Calu3 (cell line): ENCODE measurements at regions of chr5 and their contacts with region 1.

Region 1: DNA sequence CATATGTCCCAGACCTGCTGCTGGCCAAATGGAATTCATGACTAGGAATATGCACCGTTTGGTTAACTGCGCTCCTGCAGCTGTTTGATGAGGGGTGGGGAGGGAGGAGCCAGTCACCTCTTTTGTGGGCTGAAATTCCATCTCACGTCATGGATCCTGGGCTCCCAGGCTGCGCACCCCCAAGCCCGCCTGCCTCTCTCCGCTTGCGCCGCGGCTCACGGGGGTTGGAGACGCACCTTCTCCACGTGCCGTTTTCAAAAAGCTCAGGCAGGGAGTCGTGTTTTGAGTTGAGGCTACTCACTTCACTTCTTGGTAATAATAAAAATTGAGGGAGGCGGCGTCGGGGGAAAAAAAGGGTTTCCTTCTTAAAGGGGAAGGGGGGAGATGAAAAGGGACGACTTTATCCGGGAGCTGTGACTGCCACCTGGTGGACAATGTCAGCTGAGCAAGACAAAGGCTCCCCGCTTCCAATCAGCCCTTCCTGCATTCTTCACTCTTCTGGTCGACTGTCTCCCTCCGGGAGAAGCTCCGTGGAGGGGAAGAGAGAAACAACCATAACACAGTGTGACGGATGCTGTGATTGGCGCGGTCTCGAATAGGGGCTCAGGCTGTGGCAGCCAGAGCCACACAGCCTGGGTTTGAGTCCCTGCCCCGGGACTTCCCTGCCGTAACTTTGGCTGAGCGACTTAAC is 15.9 kb upstream of the C5orf47 start:
- DNase-seq: peak; percentile 85
- H3K4me3 Mint-ChIP-seq: peak overlapping the region; percentile 73
- H3K27ac Mint-ChIP-seq: peak overlapping the region; percentile 60
- H3K4me1 Mint-ChIP-seq: peaks cover 22% of the 10 kb centered on the region
- H3K27me3 Mint-ChIP-seq: peaks cover 21% of the 10 kb centered on the region
- CTCF ChIP-seq: peak; percentile 82

Region 2: GRCh38 chr5:173689737-173690360 is 283.2 kb before region 1 on chr5:
- CTCF ChIA-PET with region 1: interaction called, 4 read pairs
- intact Hi-C with region 1: loop called (anchors 1 kb)
- DNase-seq: peak; percentile 35
- H3K4me3 Mint-ChIP-seq: peak overlapping the region; percentile 28
- H3K27ac Mint-ChIP-seq: peak overlapping the region; percentile 66
- H3K4me1 Mint-ChIP-seq: peaks cover 27% of the 10 kb centered on the region
- H3K27me3 Mint-ChIP-seq: no peaks in the 10 kb centered on the region
- CTCF ChIP-seq: no peak

Region 3: DNA sequence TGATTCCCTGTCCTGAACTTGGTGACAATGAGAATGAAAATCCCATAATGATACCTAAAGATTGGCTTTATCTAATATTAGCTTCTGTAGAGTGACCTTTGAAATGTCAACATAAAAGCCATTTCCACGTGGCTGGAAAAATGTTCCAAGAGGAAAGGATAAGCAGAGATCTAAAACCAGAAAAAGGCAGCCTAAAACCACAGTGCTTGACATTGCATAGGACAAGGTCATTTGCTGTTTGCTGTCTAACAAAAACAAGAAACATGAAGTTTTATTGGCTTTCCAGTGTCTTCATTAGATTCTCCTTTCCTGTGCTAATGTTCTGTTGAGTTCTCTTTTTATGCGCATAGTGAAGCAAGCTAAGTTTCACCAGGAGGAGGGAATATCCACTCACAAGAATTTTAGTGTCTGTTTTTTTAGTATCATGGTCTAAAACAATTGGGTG is 40.4 kb before region 1 on chr5:
- CTCF ChIA-PET with region 1: no interaction called
- intact Hi-C with region 1: no loop called
- DNase-seq: no peak
- H3K4me3 Mint-ChIP-seq: no peak overlapping the region
- H3K27ac Mint-ChIP-seq: no peak overlapping the region
- H3K4me1 Mint-ChIP-seq: peaks cover 6% of the 10 kb centered on the region
- H3K27me3 Mint-ChIP-seq: no peaks in the 10 kb centered on the region
- CTCF ChIP-seq: no peak